ENCODE measurements at regions of chr17 and their contacts with region 1.

Region 1: DNA sequence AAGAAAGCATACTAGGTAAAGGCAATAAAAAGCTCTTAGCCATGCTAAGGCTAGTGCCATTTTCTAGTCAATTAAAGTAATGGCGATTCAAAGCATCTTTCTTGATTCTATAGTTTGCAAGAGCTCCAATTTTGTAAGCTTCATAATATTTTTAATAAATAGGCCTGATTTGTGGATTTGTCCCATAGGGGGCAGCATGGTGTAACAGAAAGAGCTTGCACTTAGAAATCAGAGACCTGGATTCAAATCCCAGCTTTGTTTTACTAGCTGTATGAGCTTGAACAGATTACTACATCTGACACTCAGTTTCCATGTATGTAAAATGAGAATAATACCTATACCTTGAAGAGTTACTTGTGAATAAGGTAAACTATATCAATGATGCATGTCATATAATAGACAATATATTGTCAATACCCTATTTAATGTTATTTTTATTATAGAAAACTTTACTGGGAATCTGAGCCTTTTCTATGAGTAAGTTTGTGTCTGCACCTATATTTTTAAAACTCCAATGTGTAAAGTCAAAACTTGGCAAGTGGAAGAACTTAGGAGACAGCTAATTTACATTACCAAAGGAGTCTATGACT is 93.6 kb upstream of the NOG start:
- DNase-seq: no peak
- CTCF ChIP-seq: peak; percentile 29

Region 2: DNA sequence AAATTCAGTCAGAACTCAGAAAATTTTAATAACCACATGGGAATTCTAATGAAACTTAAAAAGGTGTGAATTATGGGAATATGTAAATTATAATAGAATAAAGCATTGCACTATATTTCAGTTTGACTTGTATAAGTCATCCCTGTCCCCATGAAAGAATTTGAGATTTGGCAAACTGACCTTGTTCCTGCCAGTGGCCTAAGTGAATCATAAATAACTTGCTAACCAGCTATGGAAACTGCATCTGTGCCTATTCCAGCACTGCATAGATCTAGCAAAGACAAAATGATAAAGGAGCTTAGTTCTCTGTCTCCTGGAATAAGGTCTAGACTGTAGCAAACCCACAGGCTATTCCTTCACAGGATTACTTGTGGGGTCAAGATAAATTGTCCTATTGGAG is 13.2 kb before region 1 on chr17:
- CTCF ChIA-PET with region 1: interaction called, 14 read pairs
- POLR2A ChIA-PET with region 1: no interaction called
- DNase-seq: no peak
- CTCF ChIP-seq: no peak

Region 3: GRCh38 chr17:56510554-56511342 is 10.9 kb after region 1 on chr17:
- CTCF ChIA-PET with region 1: interaction called, 13 read pairs
- POLR2A ChIA-PET with region 1: no interaction called
- DNase-seq: no peak
- CTCF ChIP-seq: no peak